ENCODE measurements at regions of chr17 and their contacts with region 1.

Region 1: DNA sequence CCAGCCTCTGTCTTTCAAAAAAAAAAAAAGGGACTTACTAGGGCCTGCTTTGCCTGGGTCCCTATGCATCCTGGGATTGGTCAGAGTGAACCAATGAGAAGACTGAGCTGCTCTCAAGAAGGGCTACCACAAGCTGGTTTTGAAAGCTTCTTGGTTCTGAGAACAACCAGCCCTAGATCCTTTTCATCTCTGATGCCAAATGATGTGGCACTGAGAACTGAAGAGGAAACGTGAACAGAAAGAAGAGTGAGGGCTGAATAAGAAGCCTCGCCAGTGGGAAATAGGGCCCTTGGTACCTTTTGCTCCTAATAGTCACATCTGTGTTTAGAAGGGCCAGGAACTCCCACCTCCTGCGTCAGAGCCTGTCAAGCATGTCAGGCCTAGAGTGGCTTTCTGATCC is 10.7 kb downstream of the TACO1 start:
- DNase-seq: peak; percentile 50
- ATAC-seq: peak; percentile 56
- H3K4me3 Mint-ChIP-seq: peak overlapping the region; percentile 8
- H3K27ac Mint-ChIP-seq: peak overlapping the region; percentile 91
- H3K4me1 Mint-ChIP-seq: peaks cover 26% of the 10 kb centered on the region
- H3K27me3 Mint-ChIP-seq: no peaks in the 10 kb centered on the region

Region 2: DNA sequence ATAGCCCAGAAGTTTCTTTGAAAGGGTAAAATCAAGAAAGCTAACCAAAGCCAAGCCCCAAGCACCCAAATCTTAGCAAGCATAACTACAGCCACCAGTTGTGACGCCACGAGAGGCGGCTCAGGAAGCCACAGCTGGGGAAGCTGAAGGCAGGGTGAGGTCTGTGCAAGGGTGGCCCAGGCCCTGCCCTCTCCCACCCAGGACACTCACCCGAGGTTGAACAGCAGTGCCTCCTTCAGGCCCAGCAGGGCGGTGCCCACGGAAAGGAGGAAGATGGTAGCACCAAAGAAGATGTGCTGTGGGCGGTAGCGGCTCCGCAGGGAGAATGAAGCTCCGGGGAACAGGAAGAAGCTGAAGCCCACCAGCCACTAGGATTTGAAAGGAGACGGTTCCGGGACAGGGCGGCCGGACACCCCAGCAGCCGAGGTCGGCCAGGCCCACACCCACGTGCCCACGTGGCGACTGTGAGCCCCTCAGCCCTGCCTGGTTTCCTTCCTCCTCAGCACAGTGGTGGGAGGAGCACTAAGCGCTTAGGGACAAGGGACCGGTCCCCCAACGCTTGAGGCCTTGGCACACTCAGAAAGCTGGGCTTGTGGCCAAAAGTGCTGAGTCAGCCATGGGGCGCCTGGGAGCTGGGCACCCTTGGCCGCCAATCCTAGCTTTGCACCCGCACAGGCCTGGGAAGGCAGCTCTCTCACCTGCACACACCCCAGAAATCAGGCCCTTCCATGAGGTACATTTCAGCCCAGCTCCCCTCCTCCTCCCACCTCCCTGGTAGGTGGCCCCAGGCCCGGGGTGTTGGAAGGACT is 176.3 kb before region 1 on chr17:
- CTCF ChIA-PET with region 1: interaction called, 249 read pairs
- DNase-seq: peak; percentile 91
- ATAC-seq: peak; percentile 93
- H3K4me3 Mint-ChIP-seq: peak overlapping the region; percentile 56
- H3K27ac Mint-ChIP-seq: peak overlapping the region; percentile 97
- H3K4me1 Mint-ChIP-seq: peaks cover 62% of the 10 kb centered on the region
- H3K27me3 Mint-ChIP-seq: no peaks in the 10 kb centered on the region

Region 3: GRCh38 chr17:63478791-63479494 is 132.4 kb before region 1 on chr17:
- CTCF ChIA-PET with region 1: interaction called, 40 read pairs
- DNase-seq: peak; percentile 89
- ATAC-seq: peak; percentile 90
- H3K4me3 Mint-ChIP-seq: no peak overlapping the region
- H3K27ac Mint-ChIP-seq: no peak overlapping the region
- H3K4me1 Mint-ChIP-seq: peaks cover 10% of the 10 kb centered on the region
- H3K27me3 Mint-ChIP-seq: peaks cover 39% of the 10 kb centered on the region

Region 4: GRCh38 chr17:63600569-63601438 is 10.6 kb before region 1 on chr17 and contains the start of gene TACO1:
- CTCF ChIA-PET with region 1: interaction called, 56 read pairs
- DNase-seq: peak; percentile 85
- ATAC-seq: peak; percentile 93
- H3K4me3 Mint-ChIP-seq: peak within 1 kb of the TSS; percentile 96
- H3K27ac Mint-ChIP-seq: peak within 1 kb of the TSS; percentile 96
- H3K4me1 Mint-ChIP-seq: peaks cover 43% of the 10 kb centered on the region
- H3K27me3 Mint-ChIP-seq: no peaks in the 10 kb centered on the region
- total RNA-seq, gene TACO1: 23.3 to 27.8 TPM

Region 5: GRCh38 chr17:63707151-63707550 is 95.8 kb after region 1 on chr17:
- CTCF ChIA-PET with region 1: interaction called, 15 read pairs
- DNase-seq: peak; percentile 41
- ATAC-seq: peak; percentile 2
- H3K4me3 Mint-ChIP-seq: no peak overlapping the region
- H3K27ac Mint-ChIP-seq: peak overlapping the region; percentile 71
- H3K4me1 Mint-ChIP-seq: peaks cover 69% of the 10 kb centered on the region
- H3K27me3 Mint-ChIP-seq: no peaks in the 10 kb centered on the region

Region 6: DNA sequence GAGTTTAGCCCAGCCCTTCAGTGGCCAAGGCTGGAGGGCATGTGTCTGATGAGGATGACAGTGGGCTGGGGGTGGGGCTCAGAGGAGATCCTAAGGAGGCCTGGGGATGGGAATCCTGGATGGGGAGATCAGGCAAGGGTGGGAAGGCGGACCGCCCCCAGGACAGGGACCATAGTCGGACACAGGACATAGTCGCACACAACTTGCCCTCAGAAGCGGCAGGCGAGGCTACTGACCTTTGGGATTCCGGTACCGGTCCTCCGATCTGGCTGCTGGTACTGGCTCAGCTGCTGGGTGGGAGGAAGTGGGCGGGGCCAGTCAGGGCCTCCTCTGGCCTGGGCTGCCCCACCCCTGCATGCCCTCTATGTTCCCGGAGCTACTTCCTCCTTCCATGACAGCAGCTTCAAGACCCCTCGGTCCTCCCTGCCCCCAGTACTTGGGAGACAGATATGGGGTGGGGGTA is 319.8 kb after region 1 on chr17:
- CTCF ChIA-PET with region 1: no interaction called
- DNase-seq: peak; percentile 82
- ATAC-seq: peak; percentile 88
- H3K4me3 Mint-ChIP-seq: peak overlapping the region; percentile 81
- H3K27ac Mint-ChIP-seq: peak overlapping the region; percentile 86
- H3K4me1 Mint-ChIP-seq: peaks cover 20% of the 10 kb centered on the region
- H3K27me3 Mint-ChIP-seq: peaks cover 7% of the 10 kb centered on the region

Measured in activated CD8-positive, alpha-beta memory T cell treated with anti-CD3 and anti-CD28 coated beads, Interleukin-2, amount 10 ng/mL, durations not matched to agents 7 days and 5 days (primary cell).